ENCODE measurements at regions of chr6 and their contacts with region 1.

Region 1: DNA sequence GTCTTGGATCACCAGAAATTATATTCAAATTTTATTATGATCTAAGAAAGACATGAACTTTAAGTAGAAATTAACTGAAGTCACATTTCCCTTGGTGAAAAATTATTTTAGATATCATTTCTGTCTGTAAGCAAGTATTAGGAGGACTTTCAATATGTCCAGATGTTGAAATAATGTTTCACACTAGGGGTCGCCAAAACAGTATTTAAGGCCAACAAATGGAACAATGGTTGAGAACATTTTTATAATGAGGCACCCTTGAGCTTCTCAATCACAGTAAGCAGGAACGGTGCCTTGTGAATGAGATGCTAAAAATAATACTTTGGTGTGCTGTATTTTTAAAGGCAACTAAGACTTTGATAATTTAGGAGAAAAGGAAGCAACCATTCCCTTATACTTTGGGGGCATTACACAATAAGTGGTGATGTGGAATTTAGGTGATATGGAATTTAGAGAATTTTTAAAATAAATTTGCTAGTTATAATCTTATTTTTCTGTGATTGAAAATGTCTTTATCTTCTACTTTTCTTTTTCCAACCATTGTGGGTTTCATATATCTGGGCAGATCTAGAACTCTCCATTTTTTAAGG is 9.6 kb upstream of the SF3B5 start:
- DNase-seq: peak in 15 of 35 experiments; percentile 6 to 84 (median 32)
- ATAC-seq: peak; percentile 68 to 79 (median 75)
- H3K4me3 ChIP-seq: no peak overlapping the region
- H3K4me3 Mint-ChIP-seq: no peak overlapping the region
- H3K27ac ChIP-seq: no peak overlapping the region
- H3K27ac Mint-ChIP-seq: no peak overlapping the region
- H3K4me1 ChIP-seq: no peaks in the 10 kb centered on the region
- H3K4me1 Mint-ChIP-seq: peaks cover 1 to 6% (median 1%) of the 10 kb centered on the region in 3 donors
- H3K27me3 ChIP-seq: no peaks in the 10 kb centered on the region
- H3K27me3 Mint-ChIP-seq: no peaks in the 10 kb centered on the region

Region 2: GRCh38 chr6:144219056-144219685 is 114.2 kb after region 1 on chr6:
- CTCF ChIA-PET with region 1: interaction called, 4 to 26 read pairs
- POLR2A ChIA-PET with region 1: interaction called in 1 of 2 experiments, 3 read pairs
- DNase-seq: peak in 1 of 35 experiments; percentile 68
- ATAC-seq: no peak
- H3K4me3 ChIP-seq: no peak overlapping the region
- H3K4me3 Mint-ChIP-seq: no peak overlapping the region
- H3K27ac ChIP-seq: peak overlapping the region; percentile 44
- H3K27ac Mint-ChIP-seq: no peak overlapping the region
- H3K4me1 ChIP-seq: peaks cover 8 to 27% of the 10 kb centered on the region in 2 experiments
- H3K4me1 Mint-ChIP-seq: peaks cover 37 to 42% (median 41%) of the 10 kb centered on the region in 3 donors
- H3K27me3 ChIP-seq: no peaks in the 10 kb centered on the region
- H3K27me3 Mint-ChIP-seq: peaks cover 0 to 3% of the 10 kb centered on the region in 2 donors

Region 3: DNA sequence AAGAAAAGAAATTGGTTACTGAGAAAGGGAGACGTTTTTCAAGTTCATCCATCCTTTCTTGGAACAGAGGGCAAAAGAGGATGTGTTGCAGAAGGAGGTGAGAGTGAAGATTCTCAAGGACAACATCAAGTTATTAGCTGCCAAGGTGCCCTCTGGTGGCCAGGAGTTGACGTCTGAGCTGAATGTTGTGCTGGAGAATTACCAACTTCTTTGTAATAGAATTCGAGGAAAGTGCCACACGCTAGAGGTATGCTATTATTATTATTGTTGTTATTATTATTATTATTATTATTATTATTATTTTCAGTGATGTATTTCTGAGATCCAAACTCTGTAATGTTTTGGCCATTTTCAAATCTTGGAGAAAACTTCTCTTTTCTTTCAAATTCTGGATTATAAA is 377.1 kb after region 1 on chr6:
- CTCF ChIA-PET with region 1: interaction called, 9 to 32 read pairs
- POLR2A ChIA-PET with region 1: interaction called, 3 to 12 read pairs
- DNase-seq: peak; percentile 37 to 80 (median 67)
- ATAC-seq: peak; percentile 66 to 77 (median 74)
- H3K4me3 ChIP-seq: no peak overlapping the region
- H3K4me3 Mint-ChIP-seq: no peak overlapping the region
- H3K27ac ChIP-seq: no peak overlapping the region
- H3K27ac Mint-ChIP-seq: peak overlapping the region; percentile 32 to 52
- H3K4me1 ChIP-seq: no peaks in the 10 kb centered on the region
- H3K4me1 Mint-ChIP-seq: peaks cover 0 to 11% (median 9%) of the 10 kb centered on the region in 3 donors
- H3K27me3 ChIP-seq: no peaks in the 10 kb centered on the region
- H3K27me3 Mint-ChIP-seq: no peaks in the 10 kb centered on the region